Right cardiac atrium (tissue), 5 donors: ENCODE measurements at regions of chr4 and their contacts with region 1.

Region 1: DNA sequence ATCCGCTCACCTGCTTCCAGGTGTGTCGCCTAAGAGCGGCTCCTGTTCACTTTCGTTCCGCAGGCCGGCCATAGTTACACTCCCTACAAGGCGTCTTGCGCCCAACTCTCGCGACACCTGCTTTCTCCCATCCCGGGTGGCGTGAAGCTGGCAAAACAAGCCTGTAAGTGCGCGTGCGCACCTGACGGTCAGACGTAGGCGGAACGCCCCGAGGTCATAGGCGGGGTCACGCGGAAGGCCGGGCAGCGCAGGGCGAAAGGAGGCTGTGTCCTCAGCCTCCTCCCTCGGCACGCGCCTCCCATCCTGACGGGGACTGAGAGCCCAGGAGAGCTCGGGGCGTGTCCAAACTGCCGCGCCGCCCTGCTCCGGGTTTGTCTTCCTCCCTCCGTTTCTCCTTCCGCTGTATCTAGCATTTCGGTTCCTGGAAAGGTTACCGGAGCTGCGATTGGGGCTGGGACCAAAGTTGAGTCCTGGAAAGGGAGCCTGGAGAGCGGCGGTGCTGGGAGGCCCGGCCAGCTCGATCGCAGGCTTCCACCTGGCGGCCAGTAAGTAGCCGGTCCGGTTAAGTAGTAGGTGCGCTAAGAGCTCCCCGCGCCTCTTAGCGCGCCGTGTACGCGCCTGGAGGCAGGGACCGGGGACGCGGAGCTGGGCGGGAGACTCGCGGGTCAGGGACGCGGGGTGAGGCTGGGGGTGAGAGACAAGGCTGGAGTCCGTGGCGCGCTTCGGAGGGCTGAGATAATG is at the starts of genes ABHD18 and MFSD8:
- DNase-seq: peak; percentile 100
- ATAC-seq: peak; percentile 99
- H3K4me3 ChIP-seq: peak within 1 kb of the TSS; percentile 79
- H3K27ac ChIP-seq: peak within 1 kb of the TSS; percentile 74
- H3K4me1 ChIP-seq: no peaks in the 10 kb centered on the region
- H3K27me3 ChIP-seq: no peaks in the 10 kb centered on the region
- total RNA-seq, gene ABHD18: 8.5 to 10.4 (median 9.4) TPM
- total RNA-seq, gene MFSD8: 9.7 to 12.2 (median 10.8) TPM

Region 2: DNA sequence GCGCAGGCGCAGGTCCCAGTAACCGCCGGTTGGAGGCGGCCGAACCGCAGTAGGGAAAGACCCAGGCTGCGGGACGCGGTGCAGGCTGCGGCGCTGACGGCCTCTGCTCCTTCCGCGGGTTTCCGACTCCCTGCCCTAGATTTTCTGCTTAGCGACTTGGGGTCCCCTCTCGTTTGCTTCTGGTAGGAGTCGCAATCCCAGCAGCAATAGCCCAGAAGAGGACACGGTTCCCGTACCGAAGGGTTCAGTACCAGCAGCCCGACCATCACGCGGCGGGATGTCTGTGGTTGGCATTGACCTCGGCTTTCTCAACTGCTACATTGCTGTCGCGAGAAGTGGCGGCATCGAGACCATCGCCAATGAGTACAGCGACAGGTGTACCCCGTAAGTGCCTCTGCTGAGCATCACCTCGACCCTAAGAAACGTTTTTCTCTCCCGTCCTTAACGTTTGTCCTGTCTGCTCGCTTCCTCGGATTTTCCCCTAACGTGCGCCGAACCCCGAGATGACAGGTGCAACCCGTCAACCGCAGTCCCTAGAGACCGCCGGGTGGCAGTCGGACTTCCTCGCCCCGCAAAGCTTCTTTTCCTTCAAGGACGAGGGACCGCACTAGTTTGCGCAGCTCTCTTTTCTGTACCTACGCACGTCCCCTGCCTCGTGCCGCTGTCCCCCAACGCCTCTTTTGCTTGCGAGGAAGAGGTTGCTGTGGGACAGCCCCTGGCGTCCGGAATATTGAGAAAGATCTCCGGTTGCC is 182.8 kb before region 1 on chr4 and contains the start of gene HSPA4L:
- intact Hi-C with region 1: loop called in 1 of 4 experiments (anchors 5 kb)
- DNase-seq: peak in 2 of 3 donors; percentile 63 to 79
- ATAC-seq: peak; percentile 58 to 60
- H3K4me3 ChIP-seq: peak within 1 kb of the TSS; percentile 71
- H3K27ac ChIP-seq: peak within 1 kb of the TSS; percentile 0
- H3K4me1 ChIP-seq: no peaks in the 10 kb centered on the region
- H3K27me3 ChIP-seq: no peaks in the 10 kb centered on the region
- total RNA-seq, gene HSPA4L: 5.9 to 12.4 (median 9.7) TPM

Region 3: GRCh38 chr4:127997534-127998388 is 32.5 kb after region 1 on chr4:
- intact Hi-C with region 1: no loop called
- DNase-seq: no peak
- ATAC-seq: no peak
- H3K4me3 ChIP-seq: no peak overlapping the region
- H3K27ac ChIP-seq: no peak overlapping the region
- H3K4me1 ChIP-seq: no peaks in the 10 kb centered on the region
- H3K27me3 ChIP-seq: no peaks in the 10 kb centered on the region